ENCODE measurements at regions of chr7 and their contacts with region 1.

Region 1: GRCh38 chr7:73578342-73579127 is at the start of gene TBL2:
- DNase-seq: peak; percentile 97
- ATAC-seq: peak; percentile 89
- H3K4me3 Mint-ChIP-seq: peak within 1 kb of the TSS; percentile 90
- H3K27ac Mint-ChIP-seq: peak within 1 kb of the TSS; percentile 92
- H3K4me1 Mint-ChIP-seq: peaks cover 22% of the 10 kb centered on the region
- H3K27me3 Mint-ChIP-seq: no peaks in the 10 kb centered on the region
- CTCF ChIP-seq: no peak
- total RNA-seq, gene TBL2: 26.1 and 33.5 TPM in 2 replicates

Region 2: GRCh38 chr7:73397521-73398281 is 180.8 kb before region 1 on chr7:
- CTCF ChIA-PET with region 1: no interaction called
- POLR2A ChIA-PET with region 1: no interaction called
- intact Hi-C with region 1: no loop called
- DNase-seq: no peak
- ATAC-seq: no peak
- H3K4me3 Mint-ChIP-seq: no peak overlapping the region
- H3K27ac Mint-ChIP-seq: no peak overlapping the region
- H3K4me1 Mint-ChIP-seq: no peaks in the 10 kb centered on the region
- H3K27me3 Mint-ChIP-seq: peaks cover 11% of the 10 kb centered on the region
- CTCF ChIP-seq: no peak

Region 3: DNA sequence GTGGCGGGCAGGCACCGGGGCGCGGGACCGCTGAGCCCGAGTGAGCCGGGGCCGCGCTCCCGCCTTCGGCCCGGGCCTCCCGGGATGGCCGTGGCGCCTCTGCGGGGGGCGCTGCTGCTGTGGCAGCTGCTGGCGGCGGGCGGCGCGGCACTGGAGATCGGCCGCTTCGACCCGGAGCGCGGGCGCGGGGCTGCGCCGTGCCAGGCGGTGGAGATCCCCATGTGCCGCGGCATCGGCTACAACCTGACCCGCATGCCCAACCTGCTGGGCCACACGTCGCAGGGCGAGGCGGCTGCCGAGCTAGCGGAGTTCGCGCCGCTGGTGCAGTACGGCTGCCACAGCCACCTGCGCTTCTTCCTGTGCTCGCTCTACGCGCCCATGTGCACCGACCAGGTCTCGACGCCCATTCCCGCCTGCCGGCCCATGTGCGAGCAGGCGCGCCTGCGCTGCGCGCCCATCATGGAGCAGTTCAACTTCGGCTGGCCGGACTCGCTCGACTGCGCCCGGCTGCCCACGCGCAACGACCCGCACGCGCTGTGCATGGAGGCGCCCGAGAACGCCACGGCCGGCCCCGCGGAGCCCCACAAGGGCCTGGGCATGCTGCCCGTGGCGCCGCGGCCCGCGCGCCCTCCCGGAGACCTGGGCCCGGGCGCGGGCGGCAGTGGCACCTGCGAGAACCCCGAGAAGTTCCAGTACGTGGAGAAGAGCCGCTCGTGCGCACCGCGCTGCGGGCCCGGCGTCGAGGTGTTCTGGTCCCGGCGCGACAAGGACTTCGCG is 144.4 kb before region 1 on chr7:
- CTCF ChIA-PET with region 1: no interaction called
- POLR2A ChIA-PET with region 1: no interaction called
- intact Hi-C with region 1: loop called (anchors 2 kb)
- DNase-seq: no peak
- ATAC-seq: peak; percentile 38
- H3K4me3 Mint-ChIP-seq: peak overlapping the region; percentile 61
- H3K27ac Mint-ChIP-seq: no peak overlapping the region
- H3K4me1 Mint-ChIP-seq: peaks cover 6% of the 10 kb centered on the region
- H3K27me3 Mint-ChIP-seq: peaks cover 8% of the 10 kb centered on the region
- CTCF ChIP-seq: no peak

Region 4: GRCh38 chr7:73522105-73522872 is 56.2 kb before region 1 on chr7 and contains the start of gene BAZ1B:
- CTCF ChIA-PET with region 1: no interaction called
- POLR2A ChIA-PET with region 1: interaction called, 25 read pairs
- intact Hi-C with region 1: loop called (anchors 1 kb)
- DNase-seq: peak; percentile 90
- ATAC-seq: peak; percentile 92
- H3K4me3 Mint-ChIP-seq: peak within 1 kb of the TSS; percentile 95
- H3K27ac Mint-ChIP-seq: peak within 1 kb of the TSS; percentile 97
- H3K4me1 Mint-ChIP-seq: peaks cover 64% of the 10 kb centered on the region
- H3K27me3 Mint-ChIP-seq: no peaks in the 10 kb centered on the region
- CTCF ChIP-seq: no peak
- total RNA-seq, gene BAZ1B: 53.6 and 59.1 TPM in 2 replicates

Region 5: GRCh38 chr7:73557108-73557396 is 21.5 kb before region 1 on chr7:
- CTCF ChIA-PET with region 1: no interaction called
- POLR2A ChIA-PET with region 1: interaction called, 59 read pairs
- intact Hi-C with region 1: loop called (anchors 1 kb)
- DNase-seq: peak; percentile 87
- ATAC-seq: peak; percentile 90
- H3K4me3 Mint-ChIP-seq: peak overlapping the region; percentile 90
- H3K27ac Mint-ChIP-seq: peak overlapping the region; percentile 87
- H3K4me1 Mint-ChIP-seq: peaks cover 28% of the 10 kb centered on the region
- H3K27me3 Mint-ChIP-seq: no peaks in the 10 kb centered on the region
- CTCF ChIP-seq: no peak

Region 6: DNA sequence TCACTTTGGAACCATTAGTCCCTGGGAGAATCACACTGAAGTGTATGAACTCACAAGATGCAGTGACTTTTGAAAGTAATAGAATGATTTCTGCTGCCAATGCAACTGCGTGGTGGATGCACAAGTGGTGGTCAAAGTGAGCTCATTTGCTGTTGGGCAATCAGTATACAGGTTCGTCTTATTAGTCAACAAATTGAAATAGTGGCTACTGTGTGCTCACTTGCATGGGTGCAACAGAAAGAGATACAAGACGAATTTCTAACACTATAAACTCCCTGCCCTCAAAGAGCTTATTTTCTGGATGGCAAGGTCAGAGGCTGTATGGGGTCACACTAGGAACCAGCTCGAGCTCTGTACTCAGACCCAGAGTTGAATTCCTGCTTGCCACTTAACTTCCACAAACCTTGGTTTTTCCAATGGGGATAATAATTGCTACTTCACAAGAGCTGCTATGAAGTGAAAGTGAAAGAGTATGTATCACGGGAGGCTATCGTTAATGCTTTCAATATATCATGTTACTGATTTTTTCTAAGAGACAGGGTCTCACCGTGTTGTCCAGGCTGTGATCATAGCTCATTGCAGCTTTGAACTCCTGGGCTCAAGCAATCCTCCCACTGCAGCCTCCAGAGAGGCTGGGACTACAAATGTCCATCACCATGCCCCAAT is 12.7 kb before region 1 on chr7:
- CTCF ChIA-PET with region 1: no interaction called
- POLR2A ChIA-PET with region 1: interaction called, 59 read pairs
- intact Hi-C with region 1: loop called (anchors 1 kb)
- DNase-seq: no peak
- ATAC-seq: no peak
- H3K4me3 Mint-ChIP-seq: peak overlapping the region; percentile 82
- H3K27ac Mint-ChIP-seq: no peak overlapping the region
- H3K4me1 Mint-ChIP-seq: peaks cover 15% of the 10 kb centered on the region
- H3K27me3 Mint-ChIP-seq: no peaks in the 10 kb centered on the region
- CTCF ChIP-seq: no peak

Region 7: DNA sequence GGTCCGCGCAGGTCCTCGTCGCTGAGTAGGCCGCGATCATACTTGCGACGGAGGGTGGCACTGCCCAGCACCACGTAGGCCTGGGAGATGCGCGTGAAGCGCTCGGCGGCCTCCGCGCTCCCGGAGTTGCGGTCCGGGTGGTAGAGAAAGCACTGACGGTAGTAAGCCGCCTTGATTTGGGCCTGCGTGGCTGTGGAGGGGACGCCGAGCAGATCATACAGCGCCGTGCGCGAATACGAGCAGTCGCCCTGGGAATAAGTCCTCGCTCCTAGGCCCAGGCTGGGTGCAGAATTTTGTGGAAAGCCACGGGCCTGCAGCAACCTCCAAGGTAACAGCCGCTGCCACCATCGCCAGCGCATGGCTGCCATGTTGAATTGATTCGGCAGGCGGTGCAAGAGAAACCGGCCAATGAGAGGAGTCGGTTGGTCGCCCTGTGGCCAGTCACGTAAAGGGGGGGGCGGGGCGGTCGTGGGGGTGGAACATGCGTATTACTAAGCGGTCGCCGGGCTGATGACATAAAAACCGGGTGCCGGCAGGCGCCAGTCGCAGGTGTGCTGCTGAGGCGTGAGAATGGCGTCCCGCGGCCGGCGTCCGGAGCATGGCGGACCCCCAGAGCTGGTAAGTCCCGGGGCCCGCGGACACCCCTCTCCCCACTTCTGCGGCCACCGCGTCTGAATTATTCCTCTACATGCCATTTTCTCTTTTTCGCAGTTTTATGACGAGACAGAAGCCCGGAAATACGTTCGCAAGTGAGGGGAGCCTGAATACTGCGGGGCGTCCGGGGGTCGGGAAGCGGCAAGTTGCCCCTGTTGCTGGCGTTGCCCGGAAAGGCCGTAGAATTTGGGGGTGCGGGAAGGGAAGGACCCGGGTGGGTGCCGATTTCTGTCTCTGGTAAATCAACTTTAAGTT is 104.8 kb after region 1 on chr7 and contains the starts of genes BUD23 and DNAJC30:
- CTCF ChIA-PET with region 1: no interaction called
- POLR2A ChIA-PET with region 1: interaction called, 3 read pairs
- intact Hi-C with region 1: loop called (anchors 1 kb)
- DNase-seq: peak; percentile 81
- ATAC-seq: peak; percentile 98
- H3K4me3 Mint-ChIP-seq: peak within 1 kb of the TSS; percentile 97
- H3K27ac Mint-ChIP-seq: peak within 1 kb of the TSS; percentile 95
- H3K4me1 Mint-ChIP-seq: peaks cover 29% of the 10 kb centered on the region
- H3K27me3 Mint-ChIP-seq: no peaks in the 10 kb centered on the region
- CTCF ChIP-seq: no peak
- total RNA-seq, gene BUD23: 69.0 and 74.8 TPM in 2 replicates
- total RNA-seq, gene DNAJC30: 13.7 and 14.2 TPM in 2 replicates

Region 8: DNA sequence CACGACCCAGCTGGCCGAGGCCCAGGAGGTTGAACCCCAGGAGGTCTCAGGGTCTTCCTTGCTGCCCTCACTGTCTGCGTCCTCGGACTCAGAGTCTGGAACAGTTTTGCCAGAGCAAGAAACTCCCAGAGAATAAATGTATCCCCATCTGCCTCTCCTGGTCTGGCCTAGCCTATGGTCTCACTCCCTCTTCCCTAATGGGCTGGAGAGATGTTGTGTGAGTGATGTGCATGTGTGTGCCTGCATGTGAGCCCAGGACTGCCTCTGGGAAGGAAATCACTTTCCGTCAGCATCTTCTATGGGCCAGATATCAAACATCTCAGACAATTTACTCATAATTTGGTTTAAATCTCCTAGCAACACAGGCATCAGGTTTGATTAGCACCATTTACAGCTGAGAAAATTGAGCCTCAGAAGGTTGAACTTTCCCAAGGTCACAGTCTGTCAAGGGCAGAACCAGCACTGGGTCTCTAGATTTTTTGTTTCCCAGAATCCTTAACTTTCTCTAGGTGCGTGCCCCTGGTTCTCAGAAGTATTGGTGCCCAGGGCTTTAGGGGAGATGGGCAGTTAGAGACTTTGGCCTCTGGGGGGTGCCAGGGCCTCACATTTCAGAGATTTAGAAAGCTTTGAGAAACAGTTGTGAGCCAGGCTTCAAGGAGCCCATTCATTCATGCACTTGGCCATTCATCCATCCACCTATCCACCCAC is 287.4 kb after region 1 on chr7:
- CTCF ChIA-PET with region 1: no interaction called
- POLR2A ChIA-PET with region 1: no interaction called
- intact Hi-C with region 1: no loop called
- DNase-seq: no peak
- ATAC-seq: peak; percentile 56
- H3K4me3 Mint-ChIP-seq: no peak overlapping the region
- H3K27ac Mint-ChIP-seq: no peak overlapping the region
- H3K4me1 Mint-ChIP-seq: no peaks in the 10 kb centered on the region
- H3K27me3 Mint-ChIP-seq: peaks cover 4% of the 10 kb centered on the region
- CTCF ChIP-seq: no peak

Region 9: GRCh38 chr7:74173866-74174605 is 595.5 kb after region 1 on chr7 and contains the start of gene EIF4H:
- CTCF ChIA-PET with region 1: no interaction called
- POLR2A ChIA-PET with region 1: no interaction called
- intact Hi-C with region 1: no loop called
- DNase-seq: peak; percentile 99
- ATAC-seq: peak; percentile 80
- H3K4me3 Mint-ChIP-seq: peak within 1 kb of the TSS; percentile 91
- H3K27ac Mint-ChIP-seq: peak within 1 kb of the TSS; percentile 89
- H3K4me1 Mint-ChIP-seq: peaks cover 47% of the 10 kb centered on the region
- H3K27me3 Mint-ChIP-seq: no peaks in the 10 kb centered on the region
- CTCF ChIP-seq: no peak
- total RNA-seq, gene EIF4H: 263 and 280 TPM in 2 replicates